ENCODE measurements at regions of chr12 and their contacts with region 1.

Region 1: DNA sequence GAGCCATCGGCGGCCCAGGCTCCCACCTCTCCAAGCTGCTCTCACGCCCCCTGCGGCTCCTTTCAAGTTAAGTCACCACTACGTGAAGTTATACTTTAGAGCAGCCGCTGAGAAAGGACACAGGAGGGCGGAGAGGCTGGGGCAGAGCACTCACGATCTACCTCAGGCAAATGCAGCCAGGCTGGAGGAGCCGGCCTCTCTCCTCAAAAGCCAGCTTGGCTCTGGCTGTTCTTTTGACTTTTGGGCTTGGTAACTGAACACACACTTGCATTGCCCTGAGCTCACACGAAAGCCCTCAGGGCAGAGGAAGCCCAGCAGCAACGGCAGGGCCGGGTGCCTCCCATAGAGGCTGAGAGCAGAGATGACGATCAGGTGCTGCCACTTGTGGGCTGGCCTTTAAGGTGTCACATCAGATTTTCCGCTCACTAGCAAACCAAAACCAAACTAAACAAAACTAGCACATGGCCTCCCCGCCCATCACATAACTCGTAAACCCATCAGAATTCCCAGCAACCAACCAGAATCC is 75.2 kb downstream of the PITPNM2 start:
- DNase-seq: peak; percentile 51 to 86 (median 77)
- H3K4me3 ChIP-seq: peak overlapping the region; percentile 46
- H3K4me3 Mint-ChIP-seq: peak overlapping the region; percentile 77 to 94 (median 87)
- H3K27ac ChIP-seq: peak overlapping the region; percentile 29
- H3K27ac Mint-ChIP-seq: peak overlapping the region; percentile 86 to 99 (median 97)
- H3K4me1 ChIP-seq: peaks cover 62% of the 10 kb centered on the region
- H3K4me1 Mint-ChIP-seq: peaks cover 42 to 57% (median 43%) of the 10 kb centered on the region in 3 donors
- H3K27me3 ChIP-seq: no peaks in the 10 kb centered on the region
- H3K27me3 Mint-ChIP-seq: no peaks in the 10 kb centered on the region

Region 2: GRCh38 chr12:123043536-123044001 is 32.1 kb before region 1 on chr12:
- CTCF ChIA-PET with region 1: interaction called, 19 read pairs
- POLR2A ChIA-PET with region 1: no interaction called
- DNase-seq: peak; percentile 31 to 78 (median 64)
- H3K4me3 ChIP-seq: no peak overlapping the region
- H3K4me3 Mint-ChIP-seq: peak overlapping the region in 4 of 7 donors; percentile 15 to 46 (median 28)
- H3K27ac ChIP-seq: no peak overlapping the region
- H3K27ac Mint-ChIP-seq: peak overlapping the region; percentile 66 to 88 (median 77)
- H3K4me1 ChIP-seq: peaks cover 16% of the 10 kb centered on the region
- H3K4me1 Mint-ChIP-seq: peaks cover 21 to 25% (median 24%) of the 10 kb centered on the region in 3 donors
- H3K27me3 ChIP-seq: no peaks in the 10 kb centered on the region
- H3K27me3 Mint-ChIP-seq: peaks cover 0 to 3% of the 10 kb centered on the region in 2 donors

Measured in CD8-positive, alpha-beta memory T cell (primary cell).